HEK293 (cell line): ENCODE measurements at regions of chr10 and their contacts with region 1.

Region 1: GRCh38 chr10:132360766-132361447 is 28.9 kb downstream of the LRRC27 start:
- H3K4me3 ChIP-seq: no peak overlapping the region
- H3K27ac ChIP-seq: no peak overlapping the region
- H3K4me1 ChIP-seq: no peaks in the 10 kb centered on the region
- CTCF ChIP-seq: peak; percentile 71

Region 2: DNA sequence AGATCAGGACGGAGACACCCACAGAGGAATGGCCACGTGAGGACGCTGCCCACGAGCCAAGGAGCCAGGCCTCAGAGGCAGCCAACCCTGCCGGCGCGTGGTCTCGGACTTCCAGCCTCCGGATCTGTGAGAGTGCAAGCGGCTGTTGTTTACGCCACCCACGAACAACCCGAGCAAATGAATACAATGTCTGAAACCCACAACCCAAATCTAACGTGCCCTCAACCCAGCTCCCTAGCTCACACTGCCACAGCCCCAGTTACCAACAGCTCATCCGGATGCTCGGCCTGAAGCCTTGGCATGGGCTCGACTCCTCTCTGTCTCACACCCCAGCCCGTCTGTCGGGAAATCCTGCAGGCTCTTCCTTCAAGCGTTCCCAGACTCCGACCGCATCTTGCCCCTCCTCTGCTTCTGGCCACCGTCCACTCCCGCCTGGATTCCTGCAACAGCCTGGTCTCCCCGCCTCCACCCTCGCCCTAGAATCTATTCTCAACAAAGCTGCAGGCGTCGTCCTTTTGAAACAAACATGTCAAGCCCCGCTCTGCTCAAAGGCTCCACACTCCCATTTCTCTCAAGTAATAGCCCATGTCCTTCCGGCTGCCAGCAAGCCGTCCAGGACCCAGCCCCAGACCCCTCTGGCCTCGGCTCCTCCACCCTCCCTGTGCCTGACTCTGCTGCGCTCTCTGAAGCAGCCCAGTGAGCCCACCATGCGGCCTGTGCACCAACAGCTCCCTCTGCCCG is 88.5 kb before region 1 on chr10:
- CTCF ChIA-PET with region 1: no interaction called
- POLR2A ChIA-PET with region 1: no interaction called
- H3K4me3 ChIP-seq: no peak overlapping the region
- H3K27ac ChIP-seq: no peak overlapping the region
- H3K4me1 ChIP-seq: no peaks in the 10 kb centered on the region
- CTCF ChIP-seq: no peak

Region 3: DNA sequence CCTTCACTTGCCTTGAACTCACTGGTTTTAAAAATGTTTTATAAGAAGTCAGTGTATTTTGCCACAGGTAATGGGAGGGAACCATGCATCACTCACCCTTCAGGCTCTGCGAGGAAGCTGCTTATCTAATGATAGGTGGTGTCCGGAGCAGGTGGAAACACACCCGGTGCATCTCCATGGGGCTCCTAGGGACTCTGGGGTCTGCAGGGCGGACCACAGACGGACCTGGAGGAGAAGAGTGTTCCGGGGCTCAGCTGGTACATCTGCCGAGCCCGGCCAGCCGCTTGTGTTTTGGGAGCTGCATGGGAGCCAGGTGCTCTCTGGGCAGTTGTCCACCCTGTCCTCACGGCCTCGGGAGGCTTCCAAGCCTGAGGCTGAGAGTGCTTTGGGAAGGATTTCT is 21.6 kb before region 1 on chr10:
- CTCF ChIA-PET with region 1: interaction called, 15 read pairs
- POLR2A ChIA-PET with region 1: no interaction called
- H3K4me3 ChIP-seq: no peak overlapping the region
- H3K27ac ChIP-seq: no peak overlapping the region
- H3K4me1 ChIP-seq: peaks cover 11% of the 10 kb centered on the region
- CTCF ChIP-seq: no peak

Region 4: DNA sequence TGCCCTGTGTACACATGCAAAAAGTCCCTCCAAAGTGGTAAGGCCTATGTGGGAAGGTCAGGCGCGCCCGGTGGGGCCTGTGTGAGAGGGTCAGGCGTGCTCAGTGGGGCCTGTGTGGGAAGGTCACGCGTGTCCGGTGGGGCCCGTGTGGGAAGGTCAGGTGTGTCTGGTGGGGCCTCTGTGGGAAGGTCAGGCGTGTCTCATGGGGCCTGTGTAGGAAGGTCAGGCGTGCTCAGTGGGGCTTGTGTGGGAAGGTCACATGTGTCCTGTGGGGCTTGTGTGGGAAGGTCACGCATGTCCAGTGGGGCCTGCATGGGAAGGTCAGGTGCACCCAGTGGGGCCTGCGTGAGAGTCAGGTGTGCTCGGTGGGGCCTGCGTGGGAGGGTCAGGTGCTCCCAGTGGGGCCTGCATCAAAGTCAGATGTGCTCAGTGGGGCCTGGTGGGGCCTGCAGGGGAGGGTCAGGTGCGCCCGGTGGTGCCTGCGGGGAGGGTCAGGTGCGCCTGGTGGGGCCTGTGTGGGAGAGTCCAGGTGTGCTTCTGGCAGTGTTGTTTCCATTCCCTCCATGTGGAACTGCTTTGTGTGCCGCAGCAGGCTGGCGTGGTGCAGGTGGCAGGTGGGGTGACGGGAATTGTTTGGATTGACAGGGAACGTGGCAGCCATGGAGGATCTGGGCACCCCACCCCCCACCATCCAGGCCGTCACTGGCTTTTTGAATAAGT is 13.5 kb before region 1 on chr10:
- CTCF ChIA-PET with region 1: interaction called, 15 read pairs
- POLR2A ChIA-PET with region 1: no interaction called
- H3K4me3 ChIP-seq: no peak overlapping the region
- H3K27ac ChIP-seq: no peak overlapping the region
- H3K4me1 ChIP-seq: no peaks in the 10 kb centered on the region
- CTCF ChIP-seq: no peak

Region 5: GRCh38 chr10:132371641-132372081 is 10.8 kb after region 1 on chr10:
- CTCF ChIA-PET with region 1: interaction called, 10 read pairs
- POLR2A ChIA-PET with region 1: no interaction called
- H3K4me3 ChIP-seq: no peak overlapping the region
- H3K27ac ChIP-seq: no peak overlapping the region
- H3K4me1 ChIP-seq: no peaks in the 10 kb centered on the region
- CTCF ChIP-seq: no peak

Region 6: DNA sequence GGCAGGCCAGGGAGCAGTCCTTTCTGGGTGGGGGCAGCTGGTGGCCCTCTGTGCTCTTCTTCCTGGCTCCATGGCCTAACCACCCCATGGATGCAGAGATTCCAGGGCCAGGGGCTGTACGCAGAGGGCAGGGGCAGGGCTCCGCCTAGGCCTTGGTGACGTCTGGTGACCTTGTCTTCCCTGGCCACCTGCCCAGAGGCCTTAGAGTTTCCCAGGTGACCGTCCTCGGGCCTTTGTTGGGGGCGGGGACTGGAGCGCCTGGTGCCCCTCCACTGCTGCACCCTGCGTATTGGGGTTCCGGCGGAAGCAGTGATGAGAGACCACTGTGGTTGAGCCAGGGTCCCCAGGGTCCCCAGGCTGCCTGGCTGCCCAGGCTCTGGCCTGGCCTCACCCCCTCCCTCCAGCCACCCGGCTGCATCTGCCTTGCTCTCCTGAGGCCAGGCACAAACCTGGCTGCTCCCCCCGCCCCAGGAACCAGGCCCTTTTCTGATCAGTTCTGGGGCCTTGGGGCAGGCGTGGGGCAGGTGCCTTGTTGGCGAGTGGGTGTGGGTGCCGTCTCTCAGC is 46.4 kb after region 1 on chr10:
- CTCF ChIA-PET with region 1: no interaction called
- POLR2A ChIA-PET with region 1: no interaction called
- H3K4me3 ChIP-seq: no peak overlapping the region
- H3K27ac ChIP-seq: no peak overlapping the region
- H3K4me1 ChIP-seq: peaks cover 3% of the 10 kb centered on the region; the same call in 1 of the 2 replicates
- CTCF ChIP-seq: no peak

Region 7: DNA sequence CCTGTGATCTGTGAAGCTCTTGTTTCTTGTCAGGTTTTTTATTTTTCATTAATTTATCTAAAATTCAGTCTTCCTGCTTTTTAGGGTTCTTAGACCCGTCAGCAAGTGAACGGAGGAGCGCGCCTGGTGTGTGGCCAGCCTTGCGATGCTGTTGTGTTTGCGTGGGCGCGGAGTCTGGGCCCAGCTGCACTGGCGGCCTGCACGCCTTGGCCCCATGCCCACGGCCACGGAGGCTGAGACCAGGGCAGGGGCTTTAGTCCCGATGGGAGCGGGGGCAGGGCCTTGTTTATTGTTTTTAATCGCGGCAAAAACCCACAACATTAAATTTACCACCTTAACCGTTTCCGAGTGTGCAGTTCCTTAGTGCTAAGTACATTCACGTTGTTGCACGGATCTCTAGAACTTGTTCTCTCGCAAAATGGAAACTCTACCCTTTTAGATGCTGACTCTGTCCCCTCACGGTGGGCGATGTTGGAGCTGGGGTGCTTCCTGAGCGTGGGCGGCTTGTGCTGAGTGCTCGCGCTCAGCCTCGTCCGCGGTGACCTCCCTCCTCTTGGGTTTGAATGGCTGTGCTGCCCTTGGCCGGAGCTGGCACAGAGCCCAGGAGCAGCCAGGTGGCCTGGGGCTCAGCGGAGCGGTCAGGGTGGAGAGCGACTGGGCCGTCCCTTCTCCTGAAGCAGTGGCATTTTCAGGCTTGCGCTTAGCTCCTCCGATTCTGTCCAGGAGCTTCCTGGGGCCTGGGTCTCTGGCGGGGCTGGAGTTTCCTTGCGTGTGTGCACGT is 245.8 kb after region 1 on chr10:
- CTCF ChIA-PET with region 1: no interaction called
- POLR2A ChIA-PET with region 1: no interaction called
- H3K4me3 ChIP-seq: no peak overlapping the region
- H3K27ac ChIP-seq: no peak overlapping the region
- H3K4me1 ChIP-seq: no peaks in the 10 kb centered on the region
- CTCF ChIP-seq: no peak